HAP-1 (cell line): ENCODE measurements at regions of chr16 and their contacts with region 1.

Region 1: DNA sequence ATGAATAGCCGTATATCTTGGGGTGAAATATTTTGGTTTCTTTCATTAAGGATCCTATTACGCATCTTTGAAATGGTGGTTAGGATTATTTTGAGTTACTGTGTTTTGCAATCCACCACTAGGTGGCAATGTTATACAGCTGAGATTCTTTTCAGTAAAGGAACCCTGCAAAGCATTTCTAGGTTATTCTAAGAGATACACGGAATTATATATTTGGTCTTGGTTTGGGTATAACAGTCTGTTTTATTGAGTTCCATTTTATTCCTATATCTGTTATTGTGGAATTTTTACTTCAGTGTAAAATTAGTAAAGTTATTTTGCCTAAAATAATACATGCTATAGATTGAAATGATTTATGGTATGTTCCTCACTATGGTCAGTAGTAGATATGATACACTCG is 62.9 kb upstream of the CPHXL start:
- DNase-seq: peak; percentile 34 to 65
- H3K4me3 ChIP-seq: no peak overlapping the region
- H3K4me1 ChIP-seq: no peaks in the 10 kb centered on the region
- H3K27me3 ChIP-seq: peaks cover under 1% of the 10 kb centered on the region; the same call in 1 of the 2 replicates

Region 2: DNA sequence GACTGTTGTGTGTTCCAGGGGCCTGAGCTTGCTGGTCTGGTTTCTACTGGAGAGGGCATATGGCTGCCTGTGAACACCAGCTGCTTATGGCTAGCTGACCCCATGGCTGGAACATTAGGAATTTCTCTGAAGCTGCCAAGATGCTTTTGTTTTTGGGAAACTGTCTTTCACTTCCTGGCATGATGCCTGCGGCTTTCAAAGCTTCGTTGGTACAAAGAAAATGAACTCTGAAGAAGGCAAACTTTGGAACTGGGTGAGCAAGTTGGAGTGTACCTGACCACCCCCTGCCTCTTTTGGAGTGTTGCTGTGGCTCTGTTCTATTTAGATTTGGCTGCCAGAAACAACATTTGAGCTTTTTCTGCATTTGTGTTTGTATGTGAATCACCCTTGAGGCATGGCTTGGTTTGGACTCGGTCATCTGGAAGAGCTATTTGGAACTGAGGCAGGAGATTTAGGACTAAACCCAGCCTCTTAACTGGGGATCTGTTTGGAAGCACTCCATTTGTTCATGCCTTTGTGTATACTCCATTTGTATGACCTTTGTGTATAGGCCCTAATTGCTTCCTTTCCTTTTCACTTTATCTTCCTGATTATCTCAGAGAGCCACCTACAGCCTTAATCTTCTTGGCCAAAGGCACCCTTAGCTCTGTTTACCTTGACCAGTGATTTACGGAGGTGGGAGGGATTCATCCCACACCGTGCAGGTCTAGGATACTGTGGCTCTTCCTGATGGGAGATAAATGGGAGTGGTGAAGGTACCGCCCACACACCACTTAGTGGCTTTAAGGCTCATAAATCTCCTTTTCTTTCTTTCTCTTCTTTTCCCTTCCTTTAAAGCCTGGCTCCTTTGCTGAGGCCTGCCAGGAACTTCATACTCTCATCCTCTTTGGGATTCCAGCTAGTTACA is 55.7 kb before region 1 on chr16:
- in situ Hi-C with region 1: no loop called
- DNase-seq: no peak
- H3K4me3 ChIP-seq: no peak overlapping the region
- H3K4me1 ChIP-seq: no peaks in the 10 kb centered on the region
- H3K27me3 ChIP-seq: no peaks in the 10 kb centered on the region

Region 3: DNA sequence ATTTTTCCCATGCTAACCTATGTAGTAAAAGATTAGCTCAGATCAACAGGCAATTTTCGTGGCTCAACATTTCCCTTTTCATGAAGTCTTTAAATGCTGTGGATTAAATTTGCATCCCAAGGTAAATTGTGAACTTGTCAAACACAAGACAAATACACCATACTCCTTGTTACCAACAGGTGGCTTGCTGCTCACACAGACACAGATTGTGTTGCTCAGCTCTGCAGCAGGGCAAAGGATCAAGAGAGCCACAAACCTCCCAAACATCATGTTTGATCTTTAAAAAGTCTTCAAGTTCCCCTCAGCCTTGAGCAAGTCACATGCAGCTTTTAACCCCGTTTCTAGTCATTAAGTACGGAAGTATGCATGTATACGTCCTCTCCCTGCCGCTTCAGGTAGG is 368.4 kb after region 1 on chr16:
- in situ Hi-C with region 1: no loop called
- DNase-seq: no peak
- H3K4me3 ChIP-seq: no peak overlapping the region
- H3K4me1 ChIP-seq: no peaks in the 10 kb centered on the region
- H3K27me3 ChIP-seq: no peaks in the 10 kb centered on the region

Region 4: DNA sequence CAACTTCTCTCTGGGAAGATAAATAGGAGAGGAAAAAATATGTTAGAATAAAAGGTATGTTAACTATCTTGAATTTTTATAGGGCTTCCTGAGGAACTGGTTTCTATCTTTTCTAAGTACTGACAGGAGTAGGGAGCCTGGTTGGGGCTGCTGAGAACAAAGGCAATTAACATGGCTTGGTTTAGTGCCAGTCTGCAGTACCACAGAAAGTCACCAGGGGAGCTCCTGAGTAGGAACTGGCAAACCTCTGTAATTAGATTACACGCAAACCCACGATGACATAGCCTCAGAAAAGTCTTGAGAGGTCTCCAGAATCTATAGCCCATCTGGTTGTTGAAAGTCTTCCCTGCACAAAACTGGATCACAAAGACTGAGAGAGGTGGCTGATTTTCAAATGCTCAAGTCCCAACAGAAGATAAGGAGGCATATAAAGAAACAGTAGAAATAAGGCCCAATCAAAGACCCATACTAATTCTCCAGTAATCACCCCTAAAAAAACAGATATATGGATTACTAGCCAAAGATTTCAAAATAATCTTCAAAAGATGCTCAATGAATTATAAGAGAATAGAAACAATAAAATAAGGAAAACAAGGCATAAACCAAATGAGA is 476.3 kb after region 1 on chr16:
- in situ Hi-C with region 1: loop called (anchors 25 kb)
- DNase-seq: peak; percentile 43 to 71
- H3K4me3 ChIP-seq: no peak overlapping the region
- H3K4me1 ChIP-seq: no peaks in the 10 kb centered on the region
- H3K27me3 ChIP-seq: no peaks in the 10 kb centered on the region